HCT116 (cell line): ENCODE measurements at regions of chr13 and their contacts with region 1.

Region 1: GRCh38 chr13:26985285-26985878 is 186.2 kb downstream of the USP12 start:
- DNase-seq: peak; percentile 76
- ATAC-seq: peak; percentile 94
- H3K4me3 ChIP-seq: no peak overlapping the region
- H3K27ac ChIP-seq: no peak overlapping the region
- H3K4me1 ChIP-seq: peaks cover 0 to 3% of the 10 kb centered on the region in 2 experiments; a peak in 1 of 4 replicates
- H3K27me3 ChIP-seq: no peaks in the 10 kb centered on the region
- CTCF ChIP-seq: peak; percentile 68 to 87 (median 86)
- POLR2A ChIP-seq: no peak
- RAD21 ChIP-seq: peak; percentile 97

Region 2: GRCh38 chr13:26946684-26947343 is 38.6 kb before region 1 on chr13:
- CTCF ChIA-PET with region 1: interaction called, 24 read pairs
- POLR2A ChIA-PET with region 1: no interaction called
- RAD21 ChIA-PET with region 1: interaction called, 7 to 12 read pairs
- intact Hi-C with region 1: loop called (anchors 1 kb)
- DNase-seq: peak; percentile 44
- ATAC-seq: peak; percentile 96
- H3K4me3 ChIP-seq: no peak overlapping the region
- H3K27ac ChIP-seq: no peak overlapping the region
- H3K4me1 ChIP-seq: peaks cover 0 to 2% of the 10 kb centered on the region in 2 experiments; a peak in 1 of 4 replicates
- H3K27me3 ChIP-seq: peaks cover 4% of the 10 kb centered on the region; the same call in 1 of the 2 replicates
- CTCF ChIP-seq: peak; percentile 62 to 81 (median 74)
- POLR2A ChIP-seq: no peak
- RAD21 ChIP-seq: peak; percentile 86

Region 3: DNA sequence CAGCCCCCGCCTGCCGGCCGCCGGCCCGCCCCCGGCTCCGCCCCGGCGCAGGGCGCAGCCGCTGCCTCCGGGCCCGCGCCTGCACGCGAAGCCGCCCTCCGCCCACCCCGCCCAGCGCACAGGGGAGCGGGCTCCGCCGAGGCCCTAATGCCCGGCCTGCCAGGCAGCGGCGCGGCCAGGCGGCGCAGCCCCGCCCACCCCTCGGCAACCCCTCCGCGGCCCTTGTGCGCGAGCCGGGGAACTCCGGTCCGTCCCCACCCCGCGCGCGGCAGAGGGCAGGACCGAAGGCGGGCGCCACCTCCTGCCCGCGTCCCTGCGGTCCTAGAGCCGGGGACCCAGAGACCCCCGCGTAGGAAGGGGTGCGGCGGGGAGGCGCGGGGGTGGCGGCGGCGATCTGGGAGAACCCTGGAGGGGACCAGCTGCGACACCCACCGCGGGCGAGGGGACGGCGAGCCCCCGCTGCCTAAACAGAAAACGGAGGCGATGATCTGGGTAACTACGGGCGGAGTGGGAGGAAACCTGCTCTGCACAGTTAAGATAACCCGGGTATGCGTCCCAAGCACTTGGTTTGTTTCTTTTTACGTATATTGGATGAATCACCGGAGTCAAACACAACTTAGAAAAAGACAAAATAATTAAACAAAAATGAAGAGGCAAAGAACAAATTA is 186.6 kb after region 1 on chr13:
- CTCF ChIA-PET with region 1: no interaction called
- POLR2A ChIA-PET with region 1: no interaction called
- RAD21 ChIA-PET with region 1: no interaction called
- intact Hi-C with region 1: loop called (anchors 2 kb)
- DNase-seq: peak; percentile 72
- ATAC-seq: peak; percentile 92
- H3K4me3 ChIP-seq: peak overlapping the region; percentile 52 to 86
- H3K27ac ChIP-seq: peak overlapping the region; percentile 60
- H3K4me1 ChIP-seq: peaks cover 15 to 36% of the 10 kb centered on the region in 2 experiments; a peak in 3 of 4 replicates
- H3K27me3 ChIP-seq: no peaks in the 10 kb centered on the region
- CTCF ChIP-seq: no peak
- POLR2A ChIP-seq: no peak
- RAD21 ChIP-seq: 0 out of 2 replicates have a peak, but pooled peaks have one; percentile 16

Region 4: DNA sequence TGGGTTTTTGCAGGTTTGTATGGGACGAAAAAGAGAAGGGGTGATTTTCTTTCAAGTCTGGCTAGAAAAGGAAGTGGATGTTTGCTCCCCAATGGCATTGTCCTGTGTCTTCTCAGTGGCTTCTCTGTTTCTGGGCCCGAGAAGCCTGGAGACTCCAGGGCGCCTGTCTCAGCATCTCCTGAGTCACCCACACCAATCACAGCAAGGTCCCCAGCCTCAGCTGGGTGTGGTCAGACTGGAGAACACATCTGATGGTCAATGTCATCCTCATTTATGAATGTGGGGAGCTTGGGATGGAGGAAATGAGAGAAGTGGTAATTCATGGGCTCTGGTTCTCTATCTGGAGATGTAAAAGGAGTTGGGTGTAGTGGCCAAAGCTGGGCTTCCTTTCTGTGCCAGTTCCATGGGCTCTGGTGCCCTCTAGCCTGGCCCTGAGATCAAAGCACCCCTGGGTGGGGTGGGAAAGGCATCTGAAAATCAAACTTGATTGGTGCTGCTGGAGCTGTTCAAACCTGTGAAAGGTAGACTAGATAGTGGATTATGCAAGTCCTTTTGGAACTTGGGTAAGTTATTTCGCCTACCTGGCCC is 298.6 kb after region 1 on chr13:
- CTCF ChIA-PET with region 1: interaction called, 41 read pairs
- POLR2A ChIA-PET with region 1: no interaction called
- RAD21 ChIA-PET with region 1: interaction called, 8 to 9 read pairs
- intact Hi-C with region 1: loop called (anchors 2 kb)
- DNase-seq: peak; percentile 15
- ATAC-seq: peak; percentile 85
- H3K4me3 ChIP-seq: no peak overlapping the region
- H3K27ac ChIP-seq: no peak overlapping the region
- H3K4me1 ChIP-seq: peaks cover 0 to 7% of the 10 kb centered on the region in 2 experiments; a peak in 1 of 4 replicates
- H3K27me3 ChIP-seq: no peaks in the 10 kb centered on the region
- CTCF ChIP-seq: peak; percentile 45 to 47 (median 46); a peak in 5 of 6 replicates
- POLR2A ChIP-seq: no peak
- RAD21 ChIP-seq: peak; percentile 80

Region 5: DNA sequence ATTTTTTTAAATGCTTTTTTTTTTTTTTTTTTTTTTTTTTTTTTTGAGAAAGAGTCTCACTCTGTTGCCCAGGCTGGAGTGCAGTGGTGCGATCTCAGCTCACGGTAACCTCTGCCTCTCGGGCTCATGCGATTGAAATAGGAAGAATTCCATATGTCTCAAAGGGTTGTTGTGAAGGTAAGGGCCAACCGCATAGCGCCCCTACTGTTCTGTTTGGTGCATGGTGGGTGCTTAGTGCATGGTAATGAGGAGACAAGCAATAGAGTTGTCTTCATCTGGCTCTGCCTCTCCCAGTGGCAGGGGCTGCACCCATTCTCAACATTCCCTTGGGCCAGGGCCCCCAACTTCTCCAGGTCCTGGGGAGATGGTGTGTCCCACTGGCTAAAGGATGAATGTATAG is 353.9 kb after region 1 on chr13:
- CTCF ChIA-PET with region 1: interaction called, 13 read pairs
- POLR2A ChIA-PET with region 1: no interaction called
- RAD21 ChIA-PET with region 1: no interaction called
- intact Hi-C with region 1: no loop called
- DNase-seq: peak; percentile 78
- ATAC-seq: peak; percentile 96
- H3K4me3 ChIP-seq: peak overlapping the region; percentile 12 to 27; a peak in 2 of 4 replicates
- H3K27ac ChIP-seq: no peak overlapping the region
- H3K4me1 ChIP-seq: 0 out of 4 replicates have a peak, but pooled peaks cover 0 to 13% of the 10 kb centered on the region in 2 experiments
- H3K27me3 ChIP-seq: no peaks in the 10 kb centered on the region
- CTCF ChIP-seq: peak; percentile 45 to 90 (median 63); a peak in 5 of 6 replicates
- POLR2A ChIP-seq: no peak
- RAD21 ChIP-seq: peak; percentile 46

Region 6: DNA sequence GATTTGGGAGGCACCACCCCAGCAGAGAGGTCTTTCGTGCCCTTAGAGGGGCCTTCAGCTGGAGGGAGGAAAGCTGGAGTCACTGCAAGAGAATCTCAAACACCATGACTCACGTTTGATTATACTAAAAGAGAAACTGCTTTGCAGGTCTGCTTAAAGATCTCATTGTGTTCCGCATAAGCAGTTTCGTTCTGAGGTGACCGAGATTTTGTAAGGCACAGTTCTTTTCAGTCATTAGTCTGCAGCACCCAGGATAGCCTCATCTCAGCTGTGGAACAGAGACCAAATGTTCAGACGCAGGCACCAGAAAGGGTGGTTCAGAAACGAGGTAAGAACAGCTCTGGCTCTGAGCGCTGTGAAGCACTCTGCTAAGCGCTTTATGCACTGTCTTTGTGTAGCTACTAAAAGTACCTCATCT is 367.8 kb after region 1 on chr13:
- CTCF ChIA-PET with region 1: interaction called, 106 read pairs
- POLR2A ChIA-PET with region 1: interaction called, 3 read pairs
- RAD21 ChIA-PET with region 1: interaction called, 4 to 13 read pairs
- intact Hi-C with region 1: no loop called
- DNase-seq: no peak
- ATAC-seq: no peak
- H3K4me3 ChIP-seq: no peak overlapping the region
- H3K27ac ChIP-seq: no peak overlapping the region
- H3K4me1 ChIP-seq: peaks cover 0 to 4% of the 10 kb centered on the region in 2 experiments; a peak in 2 of 4 replicates
- H3K27me3 ChIP-seq: no peaks in the 10 kb centered on the region
- CTCF ChIP-seq: no peak
- POLR2A ChIP-seq: no peak
- RAD21 ChIP-seq: no peak

Region 7: GRCh38 chr13:27980280-27980998 is 995.1 kb after region 1 on chr13:
- CTCF ChIA-PET with region 1: interaction called, 4 read pairs
- POLR2A ChIA-PET with region 1: no interaction called
- RAD21 ChIA-PET with region 1: no interaction called
- intact Hi-C with region 1: loop called (anchors 10 kb)
- DNase-seq: no peak
- ATAC-seq: no peak
- H3K4me3 ChIP-seq: no peak overlapping the region
- H3K27ac ChIP-seq: no peak overlapping the region
- H3K4me1 ChIP-seq: no peaks in the 10 kb centered on the region
- H3K27me3 ChIP-seq: no peaks in the 10 kb centered on the region
- CTCF ChIP-seq: no peak
- POLR2A ChIP-seq: no peak
- RAD21 ChIP-seq: no peak